Heart right ventricle (tissue), 16 donors: ENCODE measurements at regions of chr1 and their contacts with region 1.

Region 1: DNA sequence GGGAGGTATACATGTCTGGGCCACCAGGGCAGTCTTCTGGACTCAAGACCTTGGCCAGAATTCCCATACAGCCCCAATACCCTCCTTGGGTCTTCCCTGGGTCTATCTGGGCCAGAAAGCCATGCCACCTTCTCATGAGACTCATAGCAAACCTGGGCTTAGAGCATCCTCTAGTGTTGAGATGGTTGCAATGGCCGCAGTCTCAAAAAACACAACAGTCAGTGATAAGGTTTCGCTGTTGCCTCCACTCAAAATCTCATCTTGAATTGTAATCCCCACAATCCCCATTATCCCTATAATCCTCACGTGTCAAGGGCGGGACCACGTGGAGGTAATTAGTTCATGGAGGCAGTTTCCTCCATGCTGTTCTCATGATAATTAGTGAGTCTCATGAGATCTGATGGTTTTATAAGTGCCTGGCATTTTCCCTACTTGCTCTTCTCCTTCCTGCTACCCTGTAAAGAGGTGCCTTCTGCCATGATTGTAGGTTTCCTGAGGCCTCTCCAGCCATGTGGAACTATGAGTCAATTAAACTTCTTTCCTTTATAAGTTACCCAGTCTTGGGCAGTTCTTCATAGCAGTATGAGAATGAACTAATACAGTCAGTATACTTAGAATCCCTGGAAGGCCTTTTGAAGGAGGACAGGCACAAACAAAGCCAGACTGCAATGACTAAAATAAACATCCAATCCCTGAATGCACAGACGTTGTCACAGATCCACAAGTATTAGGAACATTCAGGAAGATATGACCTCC is 77.0 kb downstream of the CTH start:
- DNase-seq: peak in 1 of 2 donors; percentile 16
- ATAC-seq: peak in 6 of 8 donors; percentile 55 to 73 (median 62)
- H3K4me3 ChIP-seq: no peak overlapping the region
- H3K27ac ChIP-seq: no peak overlapping the region
- H3K4me1 ChIP-seq: peaks cover 0 to 13% (median 2%) of the 10 kb centered on the region in 9 donors
- H3K27me3 ChIP-seq: no peaks in the 10 kb centered on the region
- CTCF ChIP-seq: peak; percentile 7 to 77 (median 60)

Region 2: DNA sequence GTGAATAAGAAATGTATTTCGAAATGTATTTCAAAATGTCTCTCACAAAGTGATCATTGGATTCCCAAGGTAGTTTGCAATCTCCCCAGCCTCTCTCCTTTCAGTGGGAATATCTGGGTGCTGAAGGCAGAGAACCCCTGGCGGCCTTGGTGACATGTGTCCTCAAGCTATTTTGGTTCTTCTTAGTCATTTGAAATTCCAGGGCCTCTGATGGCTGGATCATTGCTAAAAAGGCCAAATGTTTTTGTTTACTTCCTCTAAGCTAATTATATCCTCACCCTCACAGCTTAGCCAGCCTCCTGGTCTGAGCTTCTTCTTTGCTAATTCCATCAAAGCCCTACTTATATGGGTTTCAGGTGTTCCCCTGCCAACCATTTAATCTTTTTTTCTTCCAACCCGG is 353.9 kb before region 1 on chr1:
- intact Hi-C with region 1: loop called in 3 of 10 experiments (anchors 10 kb)
- DNase-seq: peak in 1 of 2 donors; percentile 14
- ATAC-seq: peak in 7 of 8 donors; percentile 67 to 92 (median 76)
- H3K4me3 ChIP-seq: no peak overlapping the region
- H3K27ac ChIP-seq: peak overlapping the region in 4 of 10 donors; percentile 3 to 42 (median 12)
- H3K4me1 ChIP-seq: peaks cover 0 to 10% (median 3%) of the 10 kb centered on the region in 9 donors
- H3K27me3 ChIP-seq: no peaks in the 10 kb centered on the region
- CTCF ChIP-seq: no peak

Region 3: GRCh38 chr1:70436622-70437251 is 51.4 kb before region 1 on chr1:
- intact Hi-C with region 1: loop called in 1 of 10 experiments (anchors 10 kb)
- DNase-seq: peak in 1 of 2 donors; percentile 8
- ATAC-seq: peak in 2 of 8 donors; percentile 16 to 50
- H3K4me3 ChIP-seq: no peak overlapping the region
- H3K27ac ChIP-seq: peak overlapping the region in 1 of 10 donors; percentile 23
- H3K4me1 ChIP-seq: peaks cover 0 to 13% (median 10%) of the 10 kb centered on the region in 9 donors
- H3K27me3 ChIP-seq: no peaks in the 10 kb centered on the region
- CTCF ChIP-seq: peak in 7 of 9 donors; percentile 13 to 69 (median 57)

Region 4: GRCh38 chr1:70809069-70809468 is 321.0 kb after region 1 on chr1:
- intact Hi-C with region 1: no loop called
- DNase-seq: no peak
- ATAC-seq: no peak
- H3K4me3 ChIP-seq: no peak overlapping the region
- H3K27ac ChIP-seq: no peak overlapping the region
- H3K4me1 ChIP-seq: no peaks in the 10 kb centered on the region
- H3K27me3 ChIP-seq: no peaks in the 10 kb centered on the region
- CTCF ChIP-seq: no peak